Ascending aorta (tissue), 2 donors: ENCODE measurements at regions of chr6 and their contacts with region 1.

Region 1: DNA sequence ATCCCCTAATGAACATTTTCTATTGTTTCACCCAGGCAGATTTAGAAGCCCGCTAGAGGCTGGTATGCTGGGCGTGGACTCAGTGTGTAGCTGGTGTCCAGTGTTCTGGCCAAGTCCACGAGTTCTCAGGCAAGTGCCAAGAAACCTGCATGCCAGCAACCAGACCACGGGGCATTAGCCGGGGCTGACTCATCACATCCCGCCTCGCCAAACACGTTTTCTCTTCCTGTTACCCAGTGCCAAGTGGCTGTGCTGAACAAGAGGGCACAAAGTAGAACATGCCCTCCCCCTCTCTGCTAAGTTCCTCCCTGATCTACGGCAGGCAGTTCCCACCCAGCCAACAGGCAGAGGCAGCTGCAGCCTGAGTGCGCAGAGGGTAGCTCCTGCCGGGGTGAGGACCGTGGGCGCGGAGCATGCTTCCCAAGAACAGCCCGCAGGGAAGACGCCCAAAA is 29.6 kb downstream of the RAMACL start:
- DNase-seq: peak; percentile 96 to 97
- H3K4me3 ChIP-seq: peak overlapping the region in 1 of 2 donors; percentile 44
- H3K27ac ChIP-seq: peak overlapping the region; percentile 77 to 80
- H3K4me1 ChIP-seq: peaks cover 11 to 13% of the 10 kb centered on the region in 2 donors
- H3K27me3 ChIP-seq: no peaks in the 10 kb centered on the region
- CTCF ChIP-seq: no peak

Region 2: DNA sequence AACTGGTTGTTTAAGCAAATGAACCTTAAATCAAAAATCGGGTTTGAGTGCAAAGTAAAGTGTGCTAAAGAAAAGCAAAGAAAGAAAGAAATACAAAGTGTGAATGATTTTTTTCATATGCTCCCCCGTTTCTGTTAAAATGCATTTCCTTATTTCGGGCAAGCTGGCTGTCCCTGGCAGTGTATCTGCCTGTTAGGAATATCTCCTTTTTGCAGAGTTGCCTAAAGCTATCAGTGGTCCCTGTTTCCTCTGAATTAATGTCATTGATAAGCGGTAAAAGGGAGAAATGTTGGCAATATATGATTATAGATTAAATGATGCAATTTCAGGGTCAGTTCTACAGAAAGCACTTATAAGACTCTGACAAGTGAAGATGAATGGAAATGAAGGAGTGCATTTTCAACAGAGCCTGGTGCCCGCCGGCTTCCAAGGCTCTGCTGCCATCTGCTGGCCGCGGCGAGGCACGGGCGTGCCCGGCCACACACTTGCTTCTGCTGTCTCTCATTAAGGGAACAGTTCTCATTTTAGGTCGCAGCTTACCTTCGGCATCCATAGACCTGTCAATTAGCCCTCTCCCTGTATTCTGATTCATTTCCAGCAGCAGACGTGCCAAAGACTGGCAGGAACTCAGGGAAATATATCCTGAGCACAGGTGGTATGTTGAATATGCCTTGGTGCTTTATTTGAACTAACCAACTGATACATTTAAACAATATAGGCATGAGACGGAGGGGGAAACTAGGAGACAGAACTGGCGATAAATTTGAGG is 1629.4 kb before region 1 on chr6:
- intact Hi-C with region 1: no loop called
- DNase-seq: peak in 1 of 2 donors; percentile 71
- H3K4me3 ChIP-seq: no peak overlapping the region
- H3K27ac ChIP-seq: no peak overlapping the region
- H3K4me1 ChIP-seq: no peaks in the 10 kb centered on the region
- H3K27me3 ChIP-seq: no peaks in the 10 kb centered on the region
- CTCF ChIP-seq: peak; percentile 66 to 94 (median 89)

Region 3: DNA sequence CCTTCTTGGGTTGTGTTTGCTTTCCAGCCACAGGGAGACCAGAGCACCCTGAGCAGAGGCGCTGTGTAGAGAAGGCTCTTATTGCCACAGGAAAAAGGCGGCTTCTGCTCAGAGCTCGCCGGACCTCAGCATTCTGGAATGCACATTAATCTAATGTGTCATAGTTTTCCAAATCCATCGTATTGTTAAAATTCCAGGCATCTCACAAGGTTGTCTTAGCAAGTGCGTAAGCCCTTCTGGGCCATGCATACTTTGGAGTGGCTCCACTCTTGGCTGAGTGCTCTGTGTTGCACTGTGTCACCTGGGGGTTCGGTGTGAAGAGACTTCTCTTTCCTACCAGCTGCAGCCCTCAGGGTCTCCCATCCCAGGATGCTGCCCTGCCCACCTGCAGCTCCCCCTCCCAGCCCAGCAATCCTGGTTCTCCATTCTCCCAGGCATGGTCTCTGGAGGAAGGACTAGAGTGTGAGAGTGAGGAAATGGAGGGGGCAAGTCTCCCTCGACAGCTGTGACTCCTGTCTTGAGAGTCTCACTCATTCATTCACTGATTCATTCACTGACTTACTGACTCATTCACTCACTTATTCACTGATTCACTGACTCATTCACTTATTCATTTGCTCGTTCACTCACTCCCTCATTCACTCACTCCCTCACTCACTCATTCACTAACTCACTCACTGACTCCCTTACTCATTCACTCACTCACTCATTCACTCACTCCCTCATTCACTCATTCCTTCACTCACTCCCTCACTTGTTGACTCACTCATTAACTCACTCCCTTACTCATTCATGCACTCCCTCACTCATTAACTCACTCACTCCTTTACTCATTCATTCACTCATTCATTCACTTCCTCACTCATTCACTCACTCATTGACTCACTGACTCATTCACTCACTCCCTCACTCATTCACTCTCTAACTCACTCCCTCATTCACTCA is 90.4 kb before region 1 on chr6:
- intact Hi-C with region 1: loop called (anchors 5 kb)
- DNase-seq: peak in 1 of 2 donors; percentile 75
- H3K4me3 ChIP-seq: peak overlapping the region in 1 of 2 donors; percentile 33
- H3K27ac ChIP-seq: peak overlapping the region; percentile 64 to 75
- H3K4me1 ChIP-seq: peaks cover 0 to 16% of the 10 kb centered on the region in 2 donors
- H3K27me3 ChIP-seq: no peaks in the 10 kb centered on the region
- CTCF ChIP-seq: no peak

Region 4: GRCh38 chr6:166575205-166575604 is 18.3 kb after region 1 on chr6:
- intact Hi-C with region 1: loop called (anchors 1 kb)
- DNase-seq: peak; percentile 26 to 85
- H3K4me3 ChIP-seq: no peak overlapping the region
- H3K27ac ChIP-seq: peak overlapping the region; percentile 43 to 60
- H3K4me1 ChIP-seq: peaks cover 0 to 5% of the 10 kb centered on the region in 2 donors
- H3K27me3 ChIP-seq: no peaks in the 10 kb centered on the region
- CTCF ChIP-seq: no peak

Region 5: DNA sequence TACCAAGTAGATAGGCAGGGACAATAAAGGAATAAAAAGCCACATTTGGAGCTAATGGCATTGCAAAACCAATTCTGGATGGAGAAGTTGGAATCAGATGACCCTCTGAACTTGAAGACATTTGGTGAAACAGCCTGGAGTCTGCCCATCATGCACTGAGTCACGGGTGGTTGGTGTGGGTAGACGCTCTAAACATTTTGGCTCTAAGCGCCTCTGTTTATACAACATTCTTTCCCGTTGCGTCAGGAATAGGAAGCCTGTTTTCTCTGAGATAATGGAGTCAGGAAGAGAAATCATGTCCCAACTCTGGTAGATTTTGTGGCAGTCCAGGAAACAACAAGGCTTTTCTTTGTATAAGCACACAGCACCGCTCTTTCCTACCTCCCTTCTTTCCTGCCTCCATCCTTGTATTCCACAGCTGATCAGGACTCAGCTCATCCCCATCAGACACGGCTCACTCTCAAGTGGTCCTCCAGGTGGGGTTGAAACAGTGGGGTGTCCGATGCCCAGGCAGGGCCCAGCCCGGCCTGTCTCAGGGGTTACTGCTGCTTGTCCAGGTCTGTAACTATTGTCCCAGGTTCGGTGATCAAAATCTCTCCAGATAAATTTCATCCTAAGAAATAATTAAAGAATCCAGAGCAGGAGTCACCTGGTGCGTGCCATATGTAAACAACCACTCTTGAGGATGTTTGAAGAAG is 41.7 kb after region 1 on chr6:
- intact Hi-C with region 1: loop called (anchors 2 kb)
- DNase-seq: peak in 1 of 2 donors; percentile 83
- H3K4me3 ChIP-seq: no peak overlapping the region
- H3K27ac ChIP-seq: peak overlapping the region; percentile 45 to 83
- H3K4me1 ChIP-seq: peaks cover 0 to 10% of the 10 kb centered on the region in 2 donors
- H3K27me3 ChIP-seq: no peaks in the 10 kb centered on the region
- CTCF ChIP-seq: no peak

Region 6: GRCh38 chr6:166619912-166620311 is 63.0 kb after region 1 on chr6:
- intact Hi-C with region 1: loop called (anchors 1 kb)
- DNase-seq: peak in 1 of 2 donors; percentile 82
- H3K4me3 ChIP-seq: peak overlapping the region in 1 of 2 donors; percentile 1
- H3K27ac ChIP-seq: peak overlapping the region; percentile 63 to 65
- H3K4me1 ChIP-seq: peaks cover 9 to 28% of the 10 kb centered on the region in 2 donors
- H3K27me3 ChIP-seq: no peaks in the 10 kb centered on the region
- CTCF ChIP-seq: no peak

Region 7: DNA sequence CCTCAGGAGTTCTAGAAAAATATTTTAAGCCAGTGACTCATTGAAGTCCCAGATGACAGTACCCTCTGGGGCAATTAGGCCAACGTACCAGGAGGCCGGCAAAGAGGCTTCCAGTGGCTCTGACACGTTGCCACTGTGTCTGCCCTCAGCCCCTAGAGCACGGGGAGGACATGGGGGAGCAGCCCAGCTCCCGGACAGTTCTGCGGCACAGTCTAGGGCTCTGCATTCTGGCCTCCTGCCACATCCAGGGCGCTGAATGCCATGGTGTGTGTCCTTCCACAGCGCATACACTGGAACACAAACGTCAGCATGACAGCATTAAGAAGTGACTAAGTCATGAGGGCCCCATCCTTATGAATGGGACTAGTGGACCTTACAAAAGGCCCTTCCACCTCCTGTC is 243.2 kb after region 1 on chr6:
- intact Hi-C with region 1: no loop called
- DNase-seq: no peak
- H3K4me3 ChIP-seq: no peak overlapping the region
- H3K27ac ChIP-seq: no peak overlapping the region
- H3K4me1 ChIP-seq: no peaks in the 10 kb centered on the region
- H3K27me3 ChIP-seq: no peaks in the 10 kb centered on the region
- CTCF ChIP-seq: no peak